ENCODE measurements at regions of chr5 and their contacts with region 1.

Region 1: DNA sequence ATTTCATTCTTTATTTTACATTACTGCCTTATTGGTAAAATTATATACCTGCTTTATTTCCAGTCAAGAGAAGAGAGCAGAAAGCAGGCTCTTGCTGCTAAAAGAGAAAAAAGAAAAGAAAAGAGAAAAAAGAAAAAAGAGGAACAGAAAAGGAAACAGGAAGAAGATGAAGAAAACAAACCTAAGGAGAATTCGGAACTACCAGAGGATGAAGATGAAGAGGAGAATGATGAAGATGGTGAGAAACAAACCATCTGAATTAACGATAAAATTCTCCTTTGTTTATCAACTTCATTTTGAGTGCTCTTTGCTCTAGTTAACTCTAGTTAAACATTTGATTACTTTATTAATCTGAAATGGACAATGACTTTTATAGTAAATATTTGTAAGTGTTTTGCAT is 23.5 kb upstream of the EIF4EBP3 start:
- DNase-seq: no peak
- H3K4me3 ChIP-seq: no peak overlapping the region
- H3K4me3 Mint-ChIP-seq: no peak overlapping the region
- H3K27ac ChIP-seq: peak overlapping the region in 1 of 2 donors; percentile 48
- H3K27ac Mint-ChIP-seq: peak overlapping the region in 2 of 7 donors; percentile 6 to 84
- H3K4me1 ChIP-seq: peaks cover 4 to 6% of the 10 kb centered on the region in 2 donors
- H3K4me1 Mint-ChIP-seq: peaks cover 4% of the 10 kb centered on the region
- H3K27me3 ChIP-seq: no peaks in the 10 kb centered on the region
- H3K27me3 Mint-ChIP-seq: peaks cover 0 to 1% (median 0%) of the 10 kb centered on the region in 3 donors
- CTCF ChIP-seq: no peak

Region 2: DNA sequence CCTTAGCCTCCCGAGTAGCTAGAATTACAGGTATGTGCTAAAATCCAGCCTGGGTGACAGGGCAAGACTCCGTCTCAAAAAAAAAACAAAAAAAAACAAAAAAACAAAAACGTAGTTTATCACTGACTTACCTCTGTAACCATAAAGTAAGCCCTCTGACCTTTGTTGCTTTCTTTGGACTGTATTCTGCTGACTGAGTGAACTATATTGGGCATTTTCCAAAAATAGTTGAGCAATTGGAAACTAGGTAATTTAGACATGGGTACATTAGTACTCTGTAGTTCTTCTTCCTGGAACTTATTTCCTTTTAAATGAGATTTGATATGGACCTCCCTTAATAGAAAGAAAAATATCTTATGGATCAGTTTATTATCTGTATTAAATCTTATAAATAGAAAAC is 55.8 kb before region 1 on chr5:
- intact Hi-C with region 1: loop called in 1 of 2 experiments (anchors 10 kb)
- DNase-seq: no peak
- H3K4me3 ChIP-seq: no peak overlapping the region
- H3K4me3 Mint-ChIP-seq: no peak overlapping the region
- H3K27ac ChIP-seq: no peak overlapping the region
- H3K27ac Mint-ChIP-seq: no peak overlapping the region
- H3K4me1 ChIP-seq: no peaks in the 10 kb centered on the region
- H3K4me1 Mint-ChIP-seq: peaks cover 2% of the 10 kb centered on the region
- H3K27me3 ChIP-seq: no peaks in the 10 kb centered on the region
- H3K27me3 Mint-ChIP-seq: no peaks in the 10 kb centered on the region
- CTCF ChIP-seq: no peak

Region 3: DNA sequence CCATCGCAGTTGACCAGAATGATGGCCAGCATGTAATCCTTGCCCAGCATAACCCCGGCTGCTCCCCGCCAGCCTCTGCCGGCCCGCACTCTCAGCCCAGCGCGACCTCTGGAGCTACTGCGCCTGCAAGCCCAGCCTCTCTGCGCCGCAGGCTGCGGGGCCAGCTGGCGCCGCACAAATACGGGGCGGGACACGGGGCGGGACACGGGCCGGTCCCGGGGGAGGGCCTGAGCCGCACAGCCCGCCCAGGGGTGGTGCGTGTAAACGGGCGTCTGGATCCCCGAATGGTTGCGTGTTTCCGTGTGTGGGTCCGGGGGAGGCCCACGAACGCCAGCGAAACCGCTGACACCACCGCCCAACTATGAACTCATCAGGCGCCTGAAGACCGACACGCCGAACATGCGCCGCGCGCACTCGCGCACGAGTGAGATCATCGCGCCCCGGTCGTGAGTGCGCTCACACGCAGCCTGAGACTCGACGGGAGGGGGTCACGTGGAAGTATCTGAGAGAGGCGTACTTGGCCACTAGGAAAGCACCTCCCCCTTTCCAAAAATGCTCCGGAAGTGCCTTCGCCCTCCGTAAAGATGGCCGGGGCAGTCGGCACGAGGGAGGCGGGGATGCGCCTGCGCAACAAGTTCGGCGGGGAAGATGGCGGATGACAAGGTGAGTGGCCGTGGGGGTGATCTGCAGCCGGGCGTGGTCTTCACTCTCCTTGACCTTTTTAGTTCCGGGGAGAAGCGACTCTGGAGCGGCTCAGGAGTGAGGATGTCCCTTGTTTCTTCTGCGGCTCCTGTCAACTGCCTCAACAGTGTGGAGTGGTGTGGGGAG is 40.4 kb after region 1 on chr5 and contains the starts of genes APBB3 and SLC35A4:
- intact Hi-C with region 1: no loop called
- DNase-seq: peak; percentile 99 to 100 (median 100)
- H3K4me3 ChIP-seq: peak within 1 kb of the TSS; percentile 77 to 87 (median 83)
- H3K4me3 Mint-ChIP-seq: peak within 1 kb of the TSS; percentile 91 to 98
- H3K27ac ChIP-seq: peak within 1 kb of the TSS; percentile 92
- H3K27ac Mint-ChIP-seq: peak within 1 kb of the TSS; percentile 97 to 99 (median 98)
- H3K4me1 ChIP-seq: peaks cover 33 to 65% of the 10 kb centered on the region in 2 donors
- H3K4me1 Mint-ChIP-seq: peaks cover 58% of the 10 kb centered on the region
- H3K27me3 ChIP-seq: no peaks in the 10 kb centered on the region
- H3K27me3 Mint-ChIP-seq: peaks cover 0 to 2% (median 2%) of the 10 kb centered on the region in 3 donors
- CTCF ChIP-seq: no peak
- polyA plus RNA-seq, gene APBB3: 4.9 to 211 (median 7.4) TPM
- polyA plus RNA-seq, gene SLC35A4: 44.0 to 67.1 (median 58.8) TPM